Activated CD4-positive, alpha-beta T cell treated with anti-CD3 and anti-CD28 coated beads for 36 hours (primary cell): ENCODE measurements at regions of chr2 and their contacts with region 1.

Region 1: DNA sequence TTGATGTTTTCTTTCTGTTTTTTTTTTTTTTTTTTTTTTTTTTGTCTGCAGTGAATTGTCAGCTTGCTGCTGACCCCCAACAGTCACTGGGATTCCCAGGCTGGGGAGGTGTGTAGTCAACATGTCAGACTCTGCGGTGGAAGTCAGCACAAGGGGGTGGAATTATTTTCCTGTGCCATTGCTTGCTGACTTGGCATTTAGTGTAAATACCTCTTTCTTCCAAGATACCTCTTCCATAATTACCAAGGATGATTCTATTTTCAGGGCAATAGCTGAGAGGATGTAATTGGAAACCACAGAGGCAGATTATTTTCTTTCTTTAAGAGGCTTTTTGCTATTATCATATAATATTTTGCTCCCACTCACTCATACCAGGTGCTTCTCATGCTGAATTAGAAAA is 266.3 kb downstream of the CCDC85A start:
- DNase-seq: no peak
- ATAC-seq: no peak
- H3K4me3 Mint-ChIP-seq: no peak overlapping the region
- H3K27ac Mint-ChIP-seq: no peak overlapping the region
- H3K4me1 Mint-ChIP-seq: no peaks in the 10 kb centered on the region
- H3K27me3 Mint-ChIP-seq: no peaks in the 10 kb centered on the region

Region 2: GRCh38 chr2:56118474-56118873 is 331.6 kb before region 1 on chr2:
- CTCF ChIA-PET with region 1: no interaction called
- POLR2A ChIA-PET with region 1: no interaction called
- intact Hi-C with region 1: no loop called
- DNase-seq: no peak
- ATAC-seq: no peak
- H3K4me3 Mint-ChIP-seq: no peak overlapping the region
- H3K27ac Mint-ChIP-seq: no peak overlapping the region
- H3K4me1 Mint-ChIP-seq: no peaks in the 10 kb centered on the region
- H3K27me3 Mint-ChIP-seq: peaks cover 1% of the 10 kb centered on the region

Region 3: GRCh38 chr2:56474412-56475158 is 24.5 kb after region 1 on chr2:
- CTCF ChIA-PET with region 1: no interaction called
- POLR2A ChIA-PET with region 1: no interaction called
- intact Hi-C with region 1: loop called in 1 of 2 experiments (anchors 2 kb)
- DNase-seq: no peak
- ATAC-seq: no peak
- H3K4me3 Mint-ChIP-seq: no peak overlapping the region
- H3K27ac Mint-ChIP-seq: no peak overlapping the region
- H3K4me1 Mint-ChIP-seq: no peaks in the 10 kb centered on the region
- H3K27me3 Mint-ChIP-seq: no peaks in the 10 kb centered on the region

Region 4: GRCh38 chr2:56522605-56523089 is 72.6 kb after region 1 on chr2:
- CTCF ChIA-PET with region 1: no interaction called
- POLR2A ChIA-PET with region 1: no interaction called
- intact Hi-C with region 1: no loop called
- DNase-seq: no peak
- ATAC-seq: no peak
- H3K4me3 Mint-ChIP-seq: no peak overlapping the region
- H3K27ac Mint-ChIP-seq: no peak overlapping the region
- H3K4me1 Mint-ChIP-seq: no peaks in the 10 kb centered on the region
- H3K27me3 Mint-ChIP-seq: no peaks in the 10 kb centered on the region

Region 5: DNA sequence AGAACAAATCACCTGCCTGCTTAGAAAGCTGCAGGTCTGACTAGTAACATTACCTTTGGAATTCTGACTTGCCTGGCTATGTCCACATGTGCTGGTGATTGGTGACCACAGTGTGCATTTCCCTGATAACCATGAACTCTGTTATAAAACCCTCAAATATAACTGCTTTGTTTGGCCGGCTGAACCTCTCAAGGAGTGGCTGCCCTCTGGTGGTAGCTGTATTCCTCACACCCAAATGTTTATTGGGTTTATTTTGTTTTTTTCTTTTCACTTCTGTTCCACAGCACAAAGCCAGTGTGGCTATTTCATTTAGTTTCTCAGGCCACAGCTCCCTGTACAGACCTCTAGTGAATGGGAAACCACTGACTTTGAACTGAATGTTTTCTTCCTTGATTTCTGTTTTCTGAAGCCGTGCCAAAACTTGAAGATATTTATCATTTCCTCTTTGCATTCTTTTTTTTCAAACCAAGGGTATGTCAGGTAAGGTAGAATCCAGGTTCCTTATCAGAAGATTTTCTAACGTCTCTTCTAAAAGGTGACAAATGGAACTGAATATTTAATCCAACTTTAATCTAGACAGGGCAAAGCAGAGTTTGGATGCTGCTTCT is 1047.5 kb after region 1 on chr2:
- CTCF ChIA-PET with region 1: no interaction called
- POLR2A ChIA-PET with region 1: no interaction called
- intact Hi-C with region 1: no loop called
- DNase-seq: peak; percentile 55
- ATAC-seq: peak; percentile 26
- H3K4me3 Mint-ChIP-seq: no peak overlapping the region
- H3K27ac Mint-ChIP-seq: no peak overlapping the region
- H3K4me1 Mint-ChIP-seq: no peaks in the 10 kb centered on the region
- H3K27me3 Mint-ChIP-seq: no peaks in the 10 kb centered on the region